ENCODE measurements at regions of chr6 and their contacts with region 1.

Region 1: DNA sequence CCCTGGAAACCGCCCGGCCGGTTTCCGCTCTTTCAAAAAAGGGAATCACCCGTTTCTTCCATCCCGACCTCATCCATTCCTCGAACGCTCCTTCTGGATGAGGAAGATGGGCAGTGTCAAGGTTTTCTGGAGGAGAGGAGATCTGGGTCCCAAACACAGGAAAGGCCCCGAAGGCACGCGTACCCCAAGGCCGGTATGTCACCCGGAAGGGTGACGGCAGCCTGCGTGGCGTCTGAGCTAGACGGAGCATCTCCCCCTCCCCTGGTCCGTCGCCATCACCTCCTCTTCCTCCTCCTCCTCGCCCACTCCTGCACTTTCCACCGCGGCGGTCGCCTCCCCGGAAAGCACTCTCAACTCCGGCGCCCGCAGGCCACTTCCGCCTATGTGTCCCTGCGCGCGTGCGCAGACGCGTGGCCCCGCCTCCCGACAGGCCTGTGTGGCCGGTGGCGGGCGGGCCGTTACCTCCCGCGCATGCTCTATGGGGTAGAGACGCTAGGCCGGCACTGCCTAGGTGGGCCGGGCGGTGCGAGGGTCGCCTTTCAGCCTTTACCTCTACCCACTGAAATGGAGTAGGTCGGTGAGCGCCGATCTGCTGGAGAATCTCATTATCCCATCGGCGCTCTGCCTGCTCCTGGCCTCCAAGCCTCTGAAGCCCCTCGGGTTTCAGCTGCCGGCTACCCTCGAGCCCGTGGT is at the start of gene SLC35B3:
- DNase-seq: peak; percentile 75 to 97
- H3K4me3 ChIP-seq: peak within 1 kb of the TSS; percentile 62 to 74
- H3K27ac ChIP-seq: peak within 1 kb of the TSS; percentile 75 to 85
- H3K4me1 ChIP-seq: peaks cover 0 to 17% of the 10 kb centered on the region in 2 donors
- H3K27me3 ChIP-seq: no peaks in the 10 kb centered on the region
- CTCF ChIP-seq: no peak
- total RNA-seq, gene SLC35B3: 11.3 TPM

Region 2: DNA sequence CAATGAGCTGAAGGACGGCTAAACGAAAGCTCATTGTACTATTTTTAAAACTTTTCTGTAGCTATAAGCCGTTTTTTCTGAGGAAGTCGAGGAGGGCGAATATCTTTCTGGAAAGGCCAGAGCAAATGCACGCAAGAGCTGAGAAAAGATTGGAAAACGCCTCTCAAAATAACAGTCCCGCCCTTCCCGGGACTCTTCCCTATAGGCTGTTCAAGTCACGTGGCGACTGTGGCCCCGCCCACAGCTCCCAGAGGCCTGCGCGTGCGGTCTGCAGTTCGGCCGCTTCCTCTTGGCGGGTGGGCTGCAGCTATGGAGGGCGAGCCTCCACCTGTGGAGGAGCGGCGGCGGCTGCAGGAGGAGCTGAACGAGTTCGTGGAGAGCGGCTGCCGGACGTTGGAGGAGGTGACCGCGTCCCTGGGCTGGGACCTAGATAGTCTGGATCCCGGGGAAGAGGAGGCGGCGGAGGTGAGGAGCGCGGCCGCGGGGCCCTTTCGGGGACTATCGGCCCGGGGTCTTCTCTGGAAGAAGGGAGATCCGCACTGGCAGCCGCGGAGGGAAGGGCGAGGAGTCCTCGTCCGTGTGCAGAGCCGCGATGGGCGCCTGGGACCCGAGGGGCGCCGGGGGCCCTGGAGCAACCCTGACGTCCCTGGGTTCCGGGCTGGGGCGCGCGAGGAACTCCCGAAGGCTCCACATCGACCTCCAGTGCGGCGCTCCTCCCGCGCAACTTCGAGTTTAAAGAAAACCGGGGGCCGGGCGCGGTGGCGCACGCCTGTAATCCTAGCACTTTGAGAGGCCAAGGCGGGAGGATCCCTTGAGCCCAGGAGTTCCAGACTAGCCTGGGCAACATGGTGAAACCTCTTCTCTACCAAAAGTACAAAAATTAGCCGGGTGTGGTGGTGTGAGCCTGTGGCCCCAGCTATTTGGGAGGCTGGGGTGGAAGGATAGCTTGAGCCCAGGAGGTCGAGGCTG is 845.1 kb before region 1 on chr6 and contains the start of gene SNRNP48:
- intact Hi-C with region 1: loop called (anchors 5 kb)
- DNase-seq: peak; percentile 86 to 97
- H3K4me3 ChIP-seq: peak within 1 kb of the TSS; percentile 92 to 94
- H3K27ac ChIP-seq: peak within 1 kb of the TSS; percentile 57 to 58
- H3K4me1 ChIP-seq: peaks cover 0 to 13% of the 10 kb centered on the region in 2 donors
- H3K27me3 ChIP-seq: no peaks in the 10 kb centered on the region
- CTCF ChIP-seq: peak in 1 of 3 experiments; percentile 9
- total RNA-seq, gene SNRNP48: 1.3 TPM

Region 3: GRCh38 chr6:8102122-8102958 is 333.0 kb before region 1 on chr6 and contains the start of gene EEF1E1:
- intact Hi-C with region 1: loop called (anchors 10 kb)
- DNase-seq: peak; percentile 84 to 96
- H3K4me3 ChIP-seq: peak within 1 kb of the TSS; percentile 90 to 94
- H3K27ac ChIP-seq: peak within 1 kb of the TSS; percentile 32 to 47
- H3K4me1 ChIP-seq: peaks cover 0 to 9% of the 10 kb centered on the region in 2 donors
- H3K27me3 ChIP-seq: no peaks in the 10 kb centered on the region
- CTCF ChIP-seq: no peak
- total RNA-seq, gene EEF1E1: 15.5 TPM

Region 4: DNA sequence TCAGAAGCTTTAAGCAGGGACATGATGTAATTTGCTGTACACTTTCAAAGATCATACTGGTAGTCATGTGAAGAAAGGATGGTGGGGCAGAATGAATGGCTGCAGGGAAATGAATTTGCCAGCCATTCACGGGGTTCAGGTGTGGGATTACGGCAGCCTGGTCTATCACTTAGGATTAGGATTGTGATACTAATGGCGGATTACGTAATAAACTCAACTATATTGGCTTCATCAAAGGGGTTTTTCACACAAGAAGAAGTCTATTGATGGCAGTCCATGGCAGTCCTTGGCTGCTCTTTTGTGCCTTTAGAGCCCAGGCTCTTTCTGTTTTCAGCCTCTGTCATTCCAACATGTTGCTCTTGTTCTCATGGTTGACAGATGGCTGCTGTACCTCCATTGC is 320.4 kb before region 1 on chr6:
- intact Hi-C with region 1: no loop called
- DNase-seq: no peak
- H3K4me3 ChIP-seq: no peak overlapping the region
- H3K27ac ChIP-seq: no peak overlapping the region
- H3K4me1 ChIP-seq: no peaks in the 10 kb centered on the region
- H3K27me3 ChIP-seq: no peaks in the 10 kb centered on the region
- CTCF ChIP-seq: no peak

Region 5: GRCh38 chr6:8525373-8525772 is 90.1 kb after region 1 on chr6:
- intact Hi-C with region 1: no loop called
- DNase-seq: no peak
- H3K4me3 ChIP-seq: no peak overlapping the region
- H3K27ac ChIP-seq: no peak overlapping the region
- H3K4me1 ChIP-seq: no peaks in the 10 kb centered on the region
- H3K27me3 ChIP-seq: no peaks in the 10 kb centered on the region
- CTCF ChIP-seq: no peak

Region 6: DNA sequence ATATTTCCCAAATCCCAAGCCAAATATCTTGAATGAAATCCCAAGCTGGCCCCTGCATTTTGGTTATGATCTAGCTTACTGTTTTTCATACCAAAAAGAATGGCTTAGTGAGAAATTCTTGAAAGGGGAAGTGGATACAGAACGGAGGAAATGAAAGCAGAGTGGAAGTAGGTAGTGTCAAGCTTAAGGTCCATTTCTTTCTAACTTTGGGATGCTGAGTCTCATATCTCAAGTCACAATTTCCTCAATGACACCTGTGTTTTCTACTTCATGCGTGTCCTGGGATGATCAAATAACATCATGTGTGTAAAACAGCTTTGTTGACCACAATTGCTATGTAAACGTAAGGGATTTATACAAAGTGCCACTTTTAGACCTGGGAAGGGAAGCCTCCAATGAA is 238.8 kb after region 1 on chr6:
- intact Hi-C with region 1: no loop called
- DNase-seq: no peak
- H3K4me3 ChIP-seq: no peak overlapping the region
- H3K27ac ChIP-seq: no peak overlapping the region
- H3K4me1 ChIP-seq: no peaks in the 10 kb centered on the region
- H3K27me3 ChIP-seq: no peaks in the 10 kb centered on the region
- CTCF ChIP-seq: no peak

Region 7: GRCh38 chr6:10404107-10404798 is 1968.9 kb after region 1 on chr6:
- intact Hi-C with region 1: loop called (anchors 10 kb)
- DNase-seq: peak in 1 of 2 donors; percentile 88
- H3K4me3 ChIP-seq: peak overlapping the region; percentile 65 to 70
- H3K27ac ChIP-seq: peak overlapping the region in 1 of 2 donors; percentile 11
- H3K4me1 ChIP-seq: peaks cover 0 to 10% of the 10 kb centered on the region in 2 donors
- H3K27me3 ChIP-seq: peaks cover under 1% of the 10 kb centered on the region
- CTCF ChIP-seq: peak in 2 of 3 experiments; percentile 14 to 44